HEK293 (cell line): ENCODE measurements at regions of chr19 and their contacts with region 1.

Region 1: GRCh38 chr19:17854061-17854460 is 5.6 kb upstream of the RPL18A start:
- H3K4me3 ChIP-seq: no peak overlapping the region
- H3K27ac ChIP-seq: no peak overlapping the region
- H3K4me1 ChIP-seq: 0 out of 2 replicates have a peak, but pooled peaks cover under 1% of the 10 kb centered on the region
- CTCF ChIP-seq: no peak

Region 2: GRCh38 chr19:17811681-17812080 is 42.4 kb before region 1 on chr19:
- CTCF ChIA-PET with region 1: no interaction called
- POLR2A ChIA-PET with region 1: no interaction called
- H3K4me3 ChIP-seq: no peak overlapping the region
- H3K27ac ChIP-seq: no peak overlapping the region
- H3K4me1 ChIP-seq: no peaks in the 10 kb centered on the region
- CTCF ChIP-seq: no peak

Region 3: DNA sequence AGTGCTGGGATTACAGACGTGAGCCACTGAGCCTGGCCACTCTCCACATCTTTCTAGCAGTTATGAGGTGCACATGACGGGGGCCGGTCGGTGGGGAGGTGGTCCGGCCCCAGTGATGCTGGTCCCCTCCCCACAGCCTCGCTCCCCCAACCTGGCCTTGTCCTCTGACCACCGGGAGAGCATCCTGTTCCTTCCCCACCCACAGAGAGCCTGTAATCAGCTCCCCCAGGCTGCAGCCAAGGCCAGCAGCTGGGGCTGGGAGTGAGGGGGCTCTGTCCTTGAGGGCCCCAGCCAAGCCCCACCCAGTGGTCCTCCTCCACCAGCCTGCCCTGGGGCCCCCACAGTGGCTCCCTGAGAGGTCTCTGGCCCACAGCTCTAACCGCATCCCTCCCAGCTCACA is 29.7 kb before region 1 on chr19:
- CTCF ChIA-PET with region 1: no interaction called
- POLR2A ChIA-PET with region 1: interaction called, 11 read pairs
- H3K4me3 ChIP-seq: no peak overlapping the region
- H3K27ac ChIP-seq: no peak overlapping the region
- H3K4me1 ChIP-seq: no peaks in the 10 kb centered on the region
- CTCF ChIP-seq: no peak

Region 4: GRCh38 chr19:18208098-18208951 is 354.3 kb after region 1 on chr19:
- CTCF ChIA-PET with region 1: no interaction called
- POLR2A ChIA-PET with region 1: no interaction called
- H3K4me3 ChIP-seq: no peak overlapping the region
- H3K27ac ChIP-seq: no peak overlapping the region
- H3K4me1 ChIP-seq: peaks cover 8% of the 10 kb centered on the region
- CTCF ChIP-seq: no peak; the same call in 1 of the 2 replicates